Endothelial cell of umbilical vein (primary cell): ENCODE measurements at regions of chr3 and their contacts with region 1.

Region 1: GRCh38 chr3:177197041-177197727 is at the start of gene TBL1XR1:
- DNase-seq: peak; percentile 91
- H3K4me3 ChIP-seq: peak within 1 kb of the TSS; percentile 84 to 97 (median 95)
- H3K27ac ChIP-seq: peak within 1 kb of the TSS; percentile 93
- H3K4me1 ChIP-seq: peaks cover 32% of the 10 kb centered on the region
- H3K27me3 ChIP-seq: no peaks in the 10 kb centered on the region
- CTCF ChIP-seq: no peak
- POLR2A ChIP-seq: no peak
- total RNA-seq, gene TBL1XR1: 146 and 152 TPM in 2 replicates

Region 2: DNA sequence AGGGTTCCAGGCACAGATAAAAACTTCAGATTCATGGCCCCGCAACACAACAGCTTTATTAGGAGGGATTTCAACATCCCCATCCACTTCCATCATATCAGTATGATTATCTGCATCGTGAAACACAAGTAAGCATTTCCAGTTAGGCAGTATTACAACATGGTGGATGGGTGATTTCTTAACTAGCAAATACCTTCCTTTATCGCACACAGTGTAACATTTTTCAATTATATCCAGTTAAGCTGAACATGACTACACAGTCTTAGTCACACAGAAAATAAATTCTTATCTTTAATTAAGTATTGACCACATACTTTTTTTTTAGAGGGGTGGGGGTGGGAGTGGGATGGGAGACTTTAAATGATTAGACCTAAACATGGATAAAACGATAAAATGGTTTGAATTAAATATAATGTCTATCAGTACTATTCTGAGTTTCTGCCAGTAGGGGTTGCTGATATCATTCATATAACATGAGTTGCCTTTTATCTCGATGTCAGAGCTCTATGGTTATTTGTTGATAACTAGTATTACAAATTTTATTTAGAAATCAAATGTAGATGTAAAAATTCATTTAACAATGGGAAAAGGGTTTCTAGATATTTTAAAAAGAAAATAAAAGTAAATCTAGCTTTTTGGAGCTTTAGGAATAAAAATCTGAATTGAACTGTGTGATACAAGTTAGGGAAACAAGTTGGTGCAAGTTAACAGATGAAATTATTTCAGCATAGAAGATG is 146.5 kb before region 1 on chr3:
- CTCF ChIA-PET with region 1: interaction called, 20 read pairs
- POLR2A ChIA-PET with region 1: no interaction called
- dilution Hi-C with region 1: no loop called
- intact Hi-C with region 1: loop called (anchors 1 kb)
- DNase-seq: peak; percentile 71
- H3K4me3 ChIP-seq: no peak overlapping the region
- H3K27ac ChIP-seq: no peak overlapping the region
- H3K4me1 ChIP-seq: no peaks in the 10 kb centered on the region
- H3K27me3 ChIP-seq: no peaks in the 10 kb centered on the region
- CTCF ChIP-seq: no peak
- POLR2A ChIP-seq: no peak

Region 3: DNA sequence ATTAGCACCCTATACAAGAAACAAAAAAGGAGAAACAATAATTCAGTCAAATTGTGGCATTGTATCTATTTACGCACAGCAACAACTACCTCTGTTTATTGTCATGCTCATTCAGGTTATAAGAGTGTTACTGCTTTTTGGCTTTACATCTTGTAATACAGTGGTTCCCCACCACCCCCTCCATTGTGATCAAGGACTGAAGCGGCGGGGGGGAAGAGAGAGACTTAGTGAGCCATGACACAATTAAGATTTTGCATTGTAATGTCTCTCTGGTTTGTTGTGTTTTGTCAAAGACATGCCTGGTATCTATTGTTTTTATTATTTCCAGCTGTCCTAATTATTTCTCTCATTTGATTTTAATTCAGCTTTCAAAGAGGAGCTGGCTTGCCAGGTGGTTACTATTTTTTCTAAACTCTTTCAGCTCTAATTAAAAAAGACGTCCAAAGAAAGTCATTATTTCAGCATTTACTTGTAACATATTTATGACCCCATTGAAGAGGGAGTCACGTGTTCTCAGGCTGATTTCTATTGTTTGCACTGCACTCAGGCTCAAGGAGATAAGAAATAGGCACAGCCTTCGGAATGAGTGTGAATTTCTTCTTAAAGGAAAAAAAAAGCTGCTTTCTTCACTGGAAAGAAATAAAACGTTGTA is 234.5 kb after region 1 on chr3:
- CTCF ChIA-PET with region 1: no interaction called
- POLR2A ChIA-PET with region 1: no interaction called
- dilution Hi-C with region 1: no loop called
- intact Hi-C with region 1: loop called (anchors 5 kb)
- DNase-seq: peak; percentile 81
- H3K4me3 ChIP-seq: no peak overlapping the region
- H3K27ac ChIP-seq: no peak overlapping the region
- H3K4me1 ChIP-seq: peaks cover 2% of the 10 kb centered on the region
- H3K27me3 ChIP-seq: no peaks in the 10 kb centered on the region
- CTCF ChIP-seq: no peak
- POLR2A ChIP-seq: no peak

Region 4: DNA sequence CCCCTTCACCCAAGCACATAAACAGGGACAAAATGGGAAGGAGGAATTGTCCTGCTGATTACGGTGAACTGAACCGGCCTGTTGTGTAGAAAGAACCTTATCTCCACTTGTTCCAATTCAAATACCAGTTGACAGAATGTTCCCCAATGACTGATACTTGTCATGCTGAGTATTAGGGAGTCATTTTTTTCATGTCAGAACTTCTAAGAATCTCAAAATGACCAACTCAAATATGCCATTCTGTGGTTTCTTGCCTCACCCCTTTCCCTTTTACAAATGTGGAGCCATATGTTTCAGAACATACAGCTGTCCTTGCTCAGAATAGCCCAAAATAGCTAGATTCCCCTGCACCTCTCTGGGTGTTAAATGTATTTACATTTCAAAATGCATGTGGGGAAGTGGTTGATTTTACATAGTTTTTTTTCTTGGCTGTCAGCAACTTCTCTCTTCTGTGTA is 406.0 kb after region 1 on chr3:
- CTCF ChIA-PET with region 1: no interaction called
- POLR2A ChIA-PET with region 1: no interaction called
- dilution Hi-C with region 1: no loop called
- intact Hi-C with region 1: loop called (anchors 5 kb)
- DNase-seq: peak; percentile 34
- H3K4me3 ChIP-seq: no peak overlapping the region
- H3K27ac ChIP-seq: no peak overlapping the region
- H3K4me1 ChIP-seq: peaks cover 13% of the 10 kb centered on the region
- H3K27me3 ChIP-seq: no peaks in the 10 kb centered on the region
- CTCF ChIP-seq: no peak
- POLR2A ChIP-seq: no peak

Region 5: DNA sequence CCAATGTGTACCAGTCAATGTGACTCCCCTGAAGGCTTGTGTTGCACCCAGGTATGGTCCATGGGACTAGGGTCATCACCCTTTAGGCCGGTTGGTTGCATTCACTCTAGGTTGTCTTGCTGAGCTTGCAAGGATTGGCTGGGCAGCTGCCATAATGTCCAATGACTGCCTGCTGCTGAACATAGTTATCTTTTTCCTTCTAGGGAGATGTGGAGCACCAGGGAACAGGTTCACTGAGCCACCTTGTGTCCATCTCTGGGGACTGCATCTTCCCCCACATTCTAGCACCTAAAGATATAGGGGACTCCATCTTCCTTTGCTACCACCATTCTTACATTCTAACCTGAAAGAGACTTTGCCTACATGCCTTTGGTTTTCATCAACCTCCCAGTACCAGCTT is 580.5 kb after region 1 on chr3:
- CTCF ChIA-PET with region 1: no interaction called
- POLR2A ChIA-PET with region 1: no interaction called
- dilution Hi-C with region 1: no loop called
- intact Hi-C with region 1: loop called (anchors 5 kb)
- DNase-seq: peak; percentile 41
- H3K4me3 ChIP-seq: no peak overlapping the region
- H3K27ac ChIP-seq: no peak overlapping the region
- H3K4me1 ChIP-seq: peaks cover 13% of the 10 kb centered on the region
- H3K27me3 ChIP-seq: no peaks in the 10 kb centered on the region
- CTCF ChIP-seq: peak; percentile 52 to 57
- POLR2A ChIP-seq: no peak

Region 6: GRCh38 chr3:177934001-177934891 is 737.1 kb after region 1 on chr3:
- CTCF ChIA-PET with region 1: interaction called, 3 read pairs
- POLR2A ChIA-PET with region 1: no interaction called
- dilution Hi-C with region 1: no loop called
- intact Hi-C with region 1: loop called (anchors 2 kb)
- DNase-seq: peak; percentile 12
- H3K4me3 ChIP-seq: no peak overlapping the region
- H3K27ac ChIP-seq: no peak overlapping the region
- H3K4me1 ChIP-seq: peaks cover 21% of the 10 kb centered on the region
- H3K27me3 ChIP-seq: no peaks in the 10 kb centered on the region
- CTCF ChIP-seq: no peak
- POLR2A ChIP-seq: no peak

Region 7: DNA sequence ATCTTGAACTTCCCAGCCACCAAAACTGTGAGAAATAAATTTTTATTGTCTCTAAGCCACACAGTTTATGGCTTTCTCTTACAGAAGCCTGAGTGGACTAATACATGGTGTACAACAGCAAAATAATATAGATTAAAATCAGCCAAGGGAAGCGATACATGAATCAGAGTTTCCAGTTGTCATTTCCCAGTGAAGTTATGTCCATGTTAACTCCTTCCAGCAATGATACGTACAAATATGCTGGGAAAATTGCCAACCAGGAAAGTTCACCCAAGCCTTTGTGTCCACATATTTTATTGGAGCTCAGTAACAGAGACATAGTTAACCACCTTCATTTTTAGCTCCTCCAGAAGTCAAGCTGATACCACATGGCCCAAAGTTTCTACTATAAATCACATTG is 1058.1 kb after region 1 on chr3:
- CTCF ChIA-PET with region 1: no interaction called
- POLR2A ChIA-PET with region 1: no interaction called
- dilution Hi-C with region 1: no loop called
- intact Hi-C with region 1: loop called (anchors 5 kb)
- DNase-seq: peak; percentile 98
- H3K4me3 ChIP-seq: no peak overlapping the region
- H3K27ac ChIP-seq: peak overlapping the region; percentile 62
- H3K4me1 ChIP-seq: peaks cover 15% of the 10 kb centered on the region
- H3K27me3 ChIP-seq: no peaks in the 10 kb centered on the region
- CTCF ChIP-seq: no peak
- POLR2A ChIP-seq: peak; percentile 49

Region 8: DNA sequence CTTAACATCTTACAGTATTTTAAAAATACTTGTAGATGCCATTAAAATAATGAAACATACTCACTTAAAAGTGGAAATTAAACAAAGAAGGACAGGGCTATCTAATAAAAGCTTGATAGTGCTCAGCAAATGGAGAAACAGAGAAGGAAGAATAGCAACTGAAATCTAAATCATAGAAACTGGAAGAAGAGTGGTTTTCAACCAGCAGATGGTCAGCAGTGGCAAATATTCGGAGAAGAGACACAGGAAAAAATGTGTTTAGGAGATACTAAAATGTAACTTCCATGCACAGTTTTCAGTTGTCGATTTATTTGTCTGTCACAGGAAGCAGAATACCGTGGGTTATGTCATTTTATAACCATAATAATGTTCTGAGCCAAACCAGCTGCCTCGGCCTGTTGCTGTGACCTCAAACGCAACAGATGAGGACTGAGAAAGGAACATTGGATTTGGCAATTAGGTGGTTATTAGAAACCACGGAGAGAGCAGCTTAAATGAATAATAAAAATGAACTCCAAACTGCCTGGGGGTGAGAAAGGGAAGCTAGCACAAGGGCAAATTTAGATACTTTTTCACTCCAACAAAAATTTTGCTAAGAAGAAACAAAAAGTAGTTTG is 1092.5 kb after region 1 on chr3:
- CTCF ChIA-PET with region 1: no interaction called
- POLR2A ChIA-PET with region 1: no interaction called
- dilution Hi-C with region 1: no loop called
- intact Hi-C with region 1: no loop called
- DNase-seq: no peak
- H3K4me3 ChIP-seq: no peak overlapping the region
- H3K27ac ChIP-seq: no peak overlapping the region
- H3K4me1 ChIP-seq: no peaks in the 10 kb centered on the region
- H3K27me3 ChIP-seq: no peaks in the 10 kb centered on the region
- CTCF ChIP-seq: no peak
- POLR2A ChIP-seq: no peak